ENCODE measurements at regions of chr16 and their contacts with region 1.

Region 1: DNA sequence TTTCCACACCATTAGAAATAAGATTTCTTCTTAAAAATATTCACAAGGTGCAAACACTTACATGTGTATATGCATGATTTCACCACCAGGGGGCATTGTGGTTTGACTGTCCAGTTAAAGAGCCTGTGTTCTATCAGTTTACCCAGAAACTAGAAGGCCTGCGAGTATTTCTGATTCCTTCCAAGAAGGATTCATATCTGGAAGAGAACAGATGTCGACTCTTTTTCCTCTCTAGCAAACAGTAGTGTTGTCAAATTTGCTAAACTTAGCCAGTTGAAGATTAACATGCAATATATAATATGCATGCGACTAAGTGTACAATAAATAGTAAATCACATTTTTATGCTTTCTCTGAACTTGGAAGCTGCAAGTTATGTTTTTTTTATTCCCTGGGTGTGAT is 404.1 kb downstream of the WWOX start:
- DNase-seq: peak in 3 of 5 donors; percentile 51 to 77 (median 55)
- H3K4me3 ChIP-seq: no peak overlapping the region
- H3K27ac ChIP-seq: no peak overlapping the region
- H3K4me1 ChIP-seq: peaks cover 11% of the 10 kb centered on the region
- H3K27me3 ChIP-seq: no peaks in the 10 kb centered on the region
- CTCF ChIP-seq: peak; percentile 74 to 86 (median 86)
- EP300 ChIP-seq: no peak
- POLR2A ChIP-seq: no peak

Region 2: DNA sequence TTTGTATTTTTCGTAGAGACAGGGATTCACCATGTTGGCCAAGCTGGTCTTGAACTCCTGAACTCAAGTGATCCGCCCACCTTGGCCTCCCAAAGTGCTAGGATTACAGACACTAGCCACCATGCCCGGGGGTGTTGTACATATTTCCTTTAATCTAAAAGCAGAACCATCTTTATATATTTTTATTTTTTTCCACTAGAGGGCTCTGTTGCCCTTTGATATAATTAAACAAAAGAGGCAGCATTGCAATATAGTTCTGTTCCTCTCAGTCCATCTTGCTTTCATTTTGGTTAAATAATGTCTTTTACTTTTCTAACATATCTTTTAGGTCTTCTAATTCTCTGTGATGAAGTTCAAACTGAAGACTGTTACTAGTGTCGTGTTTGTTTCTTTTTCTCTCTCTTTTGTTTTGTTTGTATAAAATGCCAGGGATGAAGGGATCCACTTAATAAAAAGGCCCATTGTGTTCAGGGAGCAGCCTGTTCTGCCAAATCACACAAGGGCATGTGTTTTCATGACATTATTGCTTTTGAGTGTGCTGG is 380.8 kb before region 1 on chr16:
- intact Hi-C with region 1: loop called in 1 of 4 experiments (anchors 10 kb)
- DNase-seq: peak in 2 of 5 donors; percentile 26 to 33
- H3K4me3 ChIP-seq: no peak overlapping the region
- H3K27ac ChIP-seq: peak overlapping the region in 1 of 2 donors; percentile 46
- H3K4me1 ChIP-seq: peaks cover 8% of the 10 kb centered on the region
- H3K27me3 ChIP-seq: no peaks in the 10 kb centered on the region
- CTCF ChIP-seq: peak; percentile 13 to 61 (median 36)
- EP300 ChIP-seq: no peak
- POLR2A ChIP-seq: no peak

Region 3: GRCh38 chr16:78551487-78552085 is 48.0 kb after region 1 on chr16:
- intact Hi-C with region 1: no loop called
- DNase-seq: no peak
- H3K4me3 ChIP-seq: no peak overlapping the region
- H3K27ac ChIP-seq: no peak overlapping the region
- H3K4me1 ChIP-seq: no peaks in the 10 kb centered on the region
- H3K27me3 ChIP-seq: no peaks in the 10 kb centered on the region
- CTCF ChIP-seq: no peak
- EP300 ChIP-seq: no peak
- POLR2A ChIP-seq: no peak

Region 4: DNA sequence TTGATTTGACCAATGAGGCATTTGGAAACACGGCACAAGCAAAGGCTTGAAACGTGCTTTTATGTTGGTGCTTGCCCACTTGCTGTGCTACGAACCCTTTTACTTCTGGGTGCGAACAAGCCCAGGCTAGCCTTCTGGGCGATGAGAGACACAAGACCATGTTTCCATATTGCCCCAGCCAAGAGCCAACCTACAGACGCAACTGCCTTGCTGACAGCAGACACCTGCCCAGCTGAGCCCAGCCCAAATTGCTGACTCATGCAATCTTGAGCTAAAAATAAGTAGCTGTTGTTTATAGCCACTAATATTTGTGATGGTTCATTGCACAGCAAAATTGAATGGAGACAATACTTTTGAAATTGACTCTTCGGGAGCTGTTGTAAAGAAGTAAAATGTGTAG is 60.3 kb after region 1 on chr16:
- intact Hi-C with region 1: no loop called
- DNase-seq: no peak
- H3K4me3 ChIP-seq: no peak overlapping the region
- H3K27ac ChIP-seq: no peak overlapping the region
- H3K4me1 ChIP-seq: no peaks in the 10 kb centered on the region
- H3K27me3 ChIP-seq: no peaks in the 10 kb centered on the region
- CTCF ChIP-seq: no peak
- EP300 ChIP-seq: no peak
- POLR2A ChIP-seq: no peak

Region 5: GRCh38 chr16:78664811-78665772 is 161.5 kb after region 1 on chr16:
- intact Hi-C with region 1: no loop called
- DNase-seq: no peak
- H3K4me3 ChIP-seq: no peak overlapping the region
- H3K27ac ChIP-seq: no peak overlapping the region
- H3K4me1 ChIP-seq: peaks cover 5% of the 10 kb centered on the region
- H3K27me3 ChIP-seq: no peaks in the 10 kb centered on the region
- CTCF ChIP-seq: no peak
- EP300 ChIP-seq: no peak
- POLR2A ChIP-seq: no peak

Region 6: DNA sequence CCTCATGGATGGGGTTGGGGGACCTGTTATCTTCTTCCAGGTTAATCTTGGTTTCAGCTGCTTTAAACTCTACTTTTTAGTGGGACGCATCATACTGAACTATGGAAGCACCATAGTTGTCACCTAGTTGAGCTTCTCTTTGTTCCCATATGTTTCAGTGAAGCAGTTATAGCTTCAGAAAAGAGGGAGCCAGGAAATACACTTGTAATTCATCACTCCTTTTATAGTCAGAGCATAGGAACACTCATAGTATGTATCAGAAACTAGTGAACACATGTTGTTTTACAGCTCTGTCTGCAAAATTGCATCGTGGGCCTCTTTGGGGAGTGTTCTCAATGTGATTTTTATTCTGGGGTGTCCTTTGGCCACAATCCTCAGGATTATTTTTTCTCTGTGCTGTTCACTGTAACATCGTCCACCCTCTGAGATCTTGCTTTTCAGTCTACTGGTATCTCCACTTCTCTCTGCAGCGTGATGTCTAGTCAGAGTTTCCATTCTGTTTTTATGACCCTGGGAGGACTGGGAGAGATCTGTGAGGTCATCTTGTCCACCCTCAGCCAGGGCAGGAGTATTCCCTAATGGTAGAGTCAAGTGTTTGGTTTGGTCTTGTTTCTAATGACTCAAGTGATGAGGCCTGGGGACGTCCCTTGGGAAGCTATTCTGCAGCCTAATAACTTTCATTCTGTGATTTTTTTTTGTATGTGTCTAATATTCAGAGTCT is 181.2 kb after region 1 on chr16:
- intact Hi-C with region 1: no loop called
- DNase-seq: no peak
- H3K4me3 ChIP-seq: no peak overlapping the region
- H3K27ac ChIP-seq: no peak overlapping the region
- H3K4me1 ChIP-seq: peaks cover 9% of the 10 kb centered on the region
- H3K27me3 ChIP-seq: no peaks in the 10 kb centered on the region
- CTCF ChIP-seq: no peak
- EP300 ChIP-seq: no peak
- POLR2A ChIP-seq: no peak

Region 7: GRCh38 chr16:78770353-78771091 is 266.9 kb after region 1 on chr16:
- intact Hi-C with region 1: loop called in 2 of 4 experiments (anchors 5 kb)
- DNase-seq: peak; percentile 58 to 87 (median 70)
- H3K4me3 ChIP-seq: no peak overlapping the region
- H3K27ac ChIP-seq: no peak overlapping the region
- H3K4me1 ChIP-seq: peaks cover 11% of the 10 kb centered on the region
- H3K27me3 ChIP-seq: no peaks in the 10 kb centered on the region
- CTCF ChIP-seq: peak; percentile 33 to 46 (median 37)
- EP300 ChIP-seq: no peak
- POLR2A ChIP-seq: no peak

Region 8: GRCh38 chr16:80079072-80079471 is 1575.5 kb after region 1 on chr16:
- intact Hi-C with region 1: loop called in 2 of 4 experiments (anchors 10 kb)
- DNase-seq: no peak
- H3K4me3 ChIP-seq: no peak overlapping the region
- H3K27ac ChIP-seq: no peak overlapping the region
- H3K4me1 ChIP-seq: peaks cover 1% of the 10 kb centered on the region
- H3K27me3 ChIP-seq: no peaks in the 10 kb centered on the region
- CTCF ChIP-seq: no peak
- EP300 ChIP-seq: no peak
- POLR2A ChIP-seq: no peak

Region 9: GRCh38 chr16:80084685-80085084 is 1581.1 kb after region 1 on chr16:
- intact Hi-C with region 1: loop called in 2 of 4 experiments (anchors 10 kb)
- DNase-seq: peak; percentile 59 to 73 (median 64)
- H3K4me3 ChIP-seq: no peak overlapping the region
- H3K27ac ChIP-seq: no peak overlapping the region
- H3K4me1 ChIP-seq: peaks cover 1% of the 10 kb centered on the region
- H3K27me3 ChIP-seq: no peaks in the 10 kb centered on the region
- CTCF ChIP-seq: peak; percentile 64 to 71 (median 66)
- EP300 ChIP-seq: no peak
- POLR2A ChIP-seq: no peak